OCI-LY7 (cell line): ENCODE measurements at regions of chr3 and their contacts with region 1.

Region 1: DNA sequence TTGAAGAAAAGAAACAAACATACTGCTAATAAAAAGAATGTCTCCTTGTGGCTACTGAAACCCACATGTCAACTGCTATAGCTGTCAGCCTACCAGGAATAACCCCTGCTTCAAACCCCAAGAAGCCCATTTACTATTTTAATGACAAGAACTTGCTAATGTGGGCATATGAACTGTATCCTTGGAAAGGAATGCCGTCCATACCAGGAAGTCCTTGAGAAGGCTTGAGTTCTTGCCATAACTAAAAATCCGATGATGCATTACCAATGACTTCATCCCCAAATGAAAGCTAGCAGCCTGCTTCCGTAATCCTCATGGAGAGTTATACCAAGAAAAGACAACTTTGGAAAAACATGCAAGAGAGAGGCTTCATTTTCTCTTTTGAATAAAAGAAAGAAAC is 34.8 kb downstream of the MINDY4B start:
- DNase-seq: no peak
- H3K4me3 ChIP-seq: no peak overlapping the region
- H3K27ac ChIP-seq: no peak overlapping the region
- H3K4me1 ChIP-seq: no peaks in the 10 kb centered on the region
- CTCF ChIP-seq: no peak

Region 2: GRCh38 chr3:150528354-150528797 is 342.0 kb before region 1 on chr3:
- CTCF ChIA-PET with region 1: no interaction called
- POLR2A ChIA-PET with region 1: no interaction called
- intact Hi-C with region 1: loop called (anchors 2 kb)
- DNase-seq: peak; percentile 38
- H3K4me3 ChIP-seq: no peak overlapping the region
- H3K27ac ChIP-seq: no peak overlapping the region
- H3K4me1 ChIP-seq: no peaks in the 10 kb centered on the region
- CTCF ChIP-seq: peak; percentile 80

Region 3: DNA sequence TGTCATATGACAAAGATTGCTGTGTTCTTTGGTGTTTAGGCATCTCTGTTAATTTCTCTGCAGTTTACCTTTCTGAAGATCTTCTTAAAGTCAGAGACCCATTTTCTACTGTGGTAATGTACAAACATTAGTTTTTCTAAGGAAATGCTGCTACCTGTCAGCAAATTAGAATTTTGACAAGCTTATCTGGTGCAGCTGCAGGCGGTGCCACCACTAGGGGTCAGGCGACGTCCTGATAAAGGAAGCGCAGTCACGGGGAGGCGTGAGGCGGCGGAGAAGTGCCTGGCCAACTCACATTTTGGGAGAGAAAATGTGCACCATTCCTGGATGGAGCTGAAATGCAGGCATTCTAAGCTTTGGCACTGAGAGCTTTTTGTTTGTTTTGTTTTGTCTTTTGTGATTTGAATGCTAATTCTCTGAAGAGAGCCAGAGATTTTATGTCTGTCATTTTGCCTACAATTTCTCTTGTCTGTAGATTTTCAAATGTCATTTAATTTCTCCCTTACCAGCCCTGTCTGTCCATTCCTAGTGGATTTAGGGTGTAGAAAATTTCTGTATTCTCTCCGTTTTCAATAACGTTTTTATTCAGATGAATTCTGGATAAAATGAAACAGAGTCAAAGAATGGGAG is 82.5 kb before region 1 on chr3:
- CTCF ChIA-PET with region 1: no interaction called
- POLR2A ChIA-PET with region 1: no interaction called
- intact Hi-C with region 1: loop called (anchors 2 kb)
- DNase-seq: peak; percentile 76
- H3K4me3 ChIP-seq: no peak overlapping the region
- H3K27ac ChIP-seq: no peak overlapping the region
- H3K4me1 ChIP-seq: no peaks in the 10 kb centered on the region
- CTCF ChIP-seq: peak; percentile 98

Region 4: GRCh38 chr3:151770956-151771355 is 900.6 kb after region 1 on chr3:
- CTCF ChIA-PET with region 1: no interaction called
- POLR2A ChIA-PET with region 1: no interaction called
- intact Hi-C with region 1: no loop called
- DNase-seq: no peak
- H3K4me3 ChIP-seq: no peak overlapping the region
- H3K27ac ChIP-seq: no peak overlapping the region
- H3K4me1 ChIP-seq: no peaks in the 10 kb centered on the region
- CTCF ChIP-seq: no peak